ENCODE measurements at regions of chr12 and their contacts with region 1.

Region 1: GRCh38 chr12:94101738-94102660 is 46.4 kb upstream of the PLXNC1 start:
- DNase-seq: peak; percentile 93
- ATAC-seq: peak; percentile 81
- H3K4me3 Mint-ChIP-seq: peak overlapping the region; percentile 77
- H3K27ac Mint-ChIP-seq: peak overlapping the region; percentile 75
- H3K4me1 Mint-ChIP-seq: peaks cover 18% of the 10 kb centered on the region
- H3K27me3 Mint-ChIP-seq: peaks cover 15% of the 10 kb centered on the region
- CTCF ChIP-seq: peak; percentile 72

Region 2: DNA sequence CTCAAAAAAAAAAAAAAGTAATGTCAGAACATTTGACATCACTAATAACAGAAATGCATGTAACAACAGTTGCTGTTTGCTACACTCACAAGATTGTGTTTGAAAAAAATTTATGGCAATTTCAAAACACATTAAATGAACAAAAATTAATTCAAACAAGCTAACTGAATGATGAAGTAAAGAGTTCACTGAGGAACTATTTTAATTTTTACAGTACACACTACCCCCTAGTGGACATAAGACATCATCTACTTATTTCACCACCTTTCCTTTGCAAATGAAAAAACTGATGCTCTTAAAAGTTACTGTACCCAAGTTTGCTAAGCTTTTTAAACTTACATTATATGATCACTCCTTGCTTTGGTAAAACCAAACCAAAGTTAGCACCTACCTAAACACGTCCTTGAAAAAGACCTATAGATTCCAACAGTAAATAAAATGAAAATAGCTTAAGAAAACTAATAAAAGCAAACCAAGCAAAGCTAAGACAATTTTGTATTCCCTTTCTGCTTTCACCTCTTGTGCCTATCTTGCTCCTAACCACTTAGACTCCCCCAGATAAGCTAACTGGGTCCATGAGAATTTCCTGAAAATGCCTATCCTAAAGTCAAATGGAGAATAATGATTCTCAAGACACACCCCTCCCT is 682.5 kb before region 1 on chr12:
- CTCF ChIA-PET with region 1: interaction called, 4 read pairs
- POLR2A ChIA-PET with region 1: no interaction called
- intact Hi-C with region 1: loop called (anchors 10 kb)
- DNase-seq: no peak
- ATAC-seq: peak; percentile 56
- H3K4me3 Mint-ChIP-seq: no peak overlapping the region
- H3K27ac Mint-ChIP-seq: peak overlapping the region; percentile 31
- H3K4me1 Mint-ChIP-seq: peaks cover 85% of the 10 kb centered on the region
- H3K27me3 Mint-ChIP-seq: no peaks in the 10 kb centered on the region
- CTCF ChIP-seq: peak; percentile 78

Region 3: GRCh38 chr12:93521225-93522080 is 580.5 kb before region 1 on chr12:
- CTCF ChIA-PET with region 1: interaction called, 53 read pairs
- POLR2A ChIA-PET with region 1: no interaction called
- intact Hi-C with region 1: no loop called
- DNase-seq: no peak
- ATAC-seq: no peak
- H3K4me3 Mint-ChIP-seq: no peak overlapping the region
- H3K27ac Mint-ChIP-seq: no peak overlapping the region
- H3K4me1 Mint-ChIP-seq: no peaks in the 10 kb centered on the region
- H3K27me3 Mint-ChIP-seq: peaks cover 5% of the 10 kb centered on the region
- CTCF ChIP-seq: no peak

Region 4: GRCh38 chr12:93677195-93678064 is 424.6 kb before region 1 on chr12 and contains the start of gene CRADD:
- CTCF ChIA-PET with region 1: interaction called, 11 read pairs
- POLR2A ChIA-PET with region 1: no interaction called
- intact Hi-C with region 1: no loop called
- DNase-seq: peak; percentile 92
- ATAC-seq: peak; percentile 96
- H3K4me3 Mint-ChIP-seq: peak within 1 kb of the TSS; percentile 98
- H3K27ac Mint-ChIP-seq: peak within 1 kb of the TSS; percentile 100
- H3K4me1 Mint-ChIP-seq: peaks cover 31% of the 10 kb centered on the region
- H3K27me3 Mint-ChIP-seq: peaks cover 10% of the 10 kb centered on the region
- CTCF ChIP-seq: no peak
- total RNA-seq, gene CRADD: 7.0 to 11.3 TPM

Region 5: GRCh38 chr12:93785262-93786010 is 316.6 kb before region 1 on chr12:
- CTCF ChIA-PET with region 1: interaction called, 18 read pairs
- POLR2A ChIA-PET with region 1: interaction called, 4 read pairs
- intact Hi-C with region 1: no loop called
- DNase-seq: peak; percentile 76
- ATAC-seq: peak; percentile 73
- H3K4me3 Mint-ChIP-seq: peak overlapping the region; percentile 36
- H3K27ac Mint-ChIP-seq: peak overlapping the region; percentile 91
- H3K4me1 Mint-ChIP-seq: peaks cover 62% of the 10 kb centered on the region
- H3K27me3 Mint-ChIP-seq: no peaks in the 10 kb centered on the region
- CTCF ChIP-seq: no peak

Region 6: DNA sequence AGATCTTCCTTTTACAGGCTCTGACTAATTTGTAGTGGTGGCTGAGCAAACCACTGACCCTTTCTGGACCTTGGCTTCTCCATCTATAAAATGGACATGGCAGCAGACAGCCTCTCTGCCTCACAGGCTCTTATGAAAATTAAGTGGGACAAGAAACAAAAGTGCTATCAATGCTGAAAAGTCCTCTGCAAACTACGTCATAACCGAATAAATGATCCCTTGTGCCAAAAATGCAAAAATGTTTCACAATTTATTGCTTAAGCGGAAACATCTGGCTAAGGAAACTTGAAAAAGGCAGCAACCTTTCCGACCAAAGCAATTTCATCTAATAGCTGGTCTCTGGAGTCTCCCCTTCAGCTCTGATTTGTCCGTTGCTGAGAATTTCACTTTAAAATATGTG is 62.1 kb before region 1 on chr12:
- CTCF ChIA-PET with region 1: interaction called, 21 read pairs
- POLR2A ChIA-PET with region 1: no interaction called
- intact Hi-C with region 1: no loop called
- DNase-seq: no peak
- ATAC-seq: no peak
- H3K4me3 Mint-ChIP-seq: no peak overlapping the region
- H3K27ac Mint-ChIP-seq: no peak overlapping the region
- H3K4me1 Mint-ChIP-seq: no peaks in the 10 kb centered on the region
- H3K27me3 Mint-ChIP-seq: no peaks in the 10 kb centered on the region
- CTCF ChIP-seq: no peak

Region 7: GRCh38 chr12:94126067-94126466 is 24.1 kb after region 1 on chr12:
- CTCF ChIA-PET with region 1: interaction called, 16 read pairs
- POLR2A ChIA-PET with region 1: interaction called, 3 read pairs
- intact Hi-C with region 1: no loop called
- DNase-seq: no peak
- ATAC-seq: no peak
- H3K4me3 Mint-ChIP-seq: no peak overlapping the region
- H3K27ac Mint-ChIP-seq: peak overlapping the region; percentile 30
- H3K4me1 Mint-ChIP-seq: peaks cover 50% of the 10 kb centered on the region
- H3K27me3 Mint-ChIP-seq: no peaks in the 10 kb centered on the region
- CTCF ChIP-seq: no peak

Region 8: DNA sequence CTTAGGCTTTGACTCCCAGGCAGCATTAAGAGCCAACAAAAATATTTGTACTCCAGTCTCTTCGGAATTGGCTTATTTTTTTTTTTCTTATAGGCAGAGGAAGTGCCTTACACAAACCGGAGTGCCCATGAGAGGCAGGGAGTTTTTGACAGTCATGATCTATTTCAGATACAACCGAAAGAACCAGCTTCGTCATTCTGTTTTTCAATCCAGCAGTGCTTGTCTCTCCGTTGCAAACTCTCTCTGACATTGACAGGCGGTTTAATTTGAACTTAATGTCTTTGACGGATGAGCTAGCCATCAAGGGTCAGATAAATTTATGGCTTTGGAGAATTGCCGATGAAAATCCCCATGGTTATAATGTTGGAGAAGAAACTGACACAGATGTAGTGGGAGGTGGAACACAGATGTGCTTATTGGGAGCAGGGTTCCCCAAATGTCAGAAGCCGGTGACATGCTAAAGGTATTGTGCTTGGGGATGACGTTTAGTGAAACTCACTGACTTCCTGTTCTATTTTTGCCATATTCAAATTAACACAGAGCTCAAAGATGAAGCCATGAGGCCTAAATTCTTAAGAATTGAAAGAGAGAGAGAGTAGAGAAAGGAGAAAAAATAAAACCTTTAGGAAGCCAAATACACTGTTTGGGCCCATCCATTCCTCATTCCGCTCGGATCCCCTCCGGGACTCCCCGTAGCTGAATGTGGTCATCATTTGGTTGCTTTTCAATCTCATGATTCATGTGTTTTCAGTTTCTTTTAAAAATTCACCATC is 106.0 kb after region 1 on chr12:
- CTCF ChIA-PET with region 1: no interaction called
- POLR2A ChIA-PET with region 1: no interaction called
- intact Hi-C with region 1: no loop called
- DNase-seq: peak; percentile 65
- ATAC-seq: peak; percentile 77
- H3K4me3 Mint-ChIP-seq: peak overlapping the region; percentile 71
- H3K27ac Mint-ChIP-seq: peak overlapping the region; percentile 96
- H3K4me1 Mint-ChIP-seq: peaks cover 67% of the 10 kb centered on the region
- H3K27me3 Mint-ChIP-seq: no peaks in the 10 kb centered on the region
- CTCF ChIP-seq: no peak